ENCODE measurements at regions of chr7 and their contacts with region 1.

Region 1: GRCh38 chr7:130896898-130897514 is 163.0 kb upstream of the KLF14 start:
- DNase-seq: no peak
- H3K4me3 ChIP-seq: no peak overlapping the region
- H3K27me3 ChIP-seq: no peaks in the 10 kb centered on the region
- CTCF ChIP-seq: peak; percentile 77

Region 2: GRCh38 chr7:130752424-130752823 is 144.6 kb before region 1 on chr7:
- CTCF ChIA-PET with region 1: no interaction called
- POLR2A ChIA-PET with region 1: no interaction called
- DNase-seq: no peak
- H3K4me3 ChIP-seq: no peak overlapping the region
- H3K27me3 ChIP-seq: peaks cover 4% of the 10 kb centered on the region
- CTCF ChIP-seq: no peak

Region 3: GRCh38 chr7:130875265-130875741 is 21.7 kb before region 1 on chr7:
- CTCF ChIA-PET with region 1: interaction called, 11 read pairs
- POLR2A ChIA-PET with region 1: no interaction called
- DNase-seq: no peak
- H3K4me3 ChIP-seq: no peak overlapping the region
- H3K27me3 ChIP-seq: no peaks in the 10 kb centered on the region
- CTCF ChIP-seq: peak; percentile 82

Region 4: GRCh38 chr7:130945411-130945811 is 48.4 kb after region 1 on chr7:
- CTCF ChIA-PET with region 1: interaction called, 10 read pairs
- POLR2A ChIA-PET with region 1: no interaction called
- DNase-seq: no peak
- H3K4me3 ChIP-seq: no peak overlapping the region
- H3K27me3 ChIP-seq: no peaks in the 10 kb centered on the region
- CTCF ChIP-seq: no peak

Region 5: GRCh38 chr7:130982160-130982638 is 85.2 kb after region 1 on chr7:
- CTCF ChIA-PET with region 1: interaction called, 29 read pairs
- POLR2A ChIA-PET with region 1: interaction called, 3 read pairs
- DNase-seq: no peak
- H3K4me3 ChIP-seq: no peak overlapping the region
- H3K27me3 ChIP-seq: no peaks in the 10 kb centered on the region
- CTCF ChIP-seq: peak; percentile 81

Region 6: DNA sequence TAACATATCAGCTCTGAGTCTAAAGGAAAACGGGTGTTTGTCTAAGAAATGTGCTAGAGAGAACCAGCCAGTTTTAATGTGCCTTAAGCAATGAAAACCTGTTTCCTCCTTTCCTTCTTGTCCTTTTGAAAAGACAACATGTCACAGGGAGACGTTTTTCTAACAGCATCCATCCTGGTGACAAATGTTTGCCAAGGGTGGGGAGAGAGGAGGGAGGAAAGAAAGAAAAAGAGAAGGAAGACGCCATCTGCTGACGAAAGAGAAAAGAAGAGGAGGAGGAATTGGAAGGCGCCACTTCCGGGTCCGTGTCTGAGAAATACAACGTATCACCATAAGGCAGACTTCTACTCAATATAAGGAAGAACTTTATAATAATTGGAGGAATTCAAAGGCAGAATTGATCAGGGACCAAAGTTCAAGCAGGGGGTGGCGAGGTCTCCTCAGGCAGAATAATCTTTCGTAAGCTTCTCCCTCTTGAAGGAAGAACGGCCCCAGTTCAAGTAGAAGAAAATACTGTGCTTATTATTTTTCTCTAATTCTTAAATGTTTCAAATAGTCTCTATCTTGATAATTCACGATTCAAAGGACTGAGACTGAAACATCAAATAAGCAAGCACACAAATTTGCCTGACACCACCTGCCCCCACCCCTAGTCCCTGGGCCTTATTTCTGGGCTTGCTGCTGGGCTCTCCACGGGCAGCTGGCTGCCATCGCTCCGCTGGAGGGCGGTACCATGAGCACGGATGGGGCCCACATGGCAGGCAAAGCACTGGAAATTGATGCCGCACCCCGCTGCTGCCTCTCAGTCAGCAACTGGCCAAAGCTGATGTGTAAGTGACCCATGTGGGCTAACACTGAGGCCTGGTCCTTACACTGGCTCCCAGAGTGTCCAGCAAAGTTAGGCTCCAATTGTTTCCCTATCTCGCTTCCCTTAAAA is 110.7 kb after region 1 on chr7:
- CTCF ChIA-PET with region 1: interaction called, 33 read pairs
- POLR2A ChIA-PET with region 1: no interaction called
- DNase-seq: no peak
- H3K4me3 ChIP-seq: no peak overlapping the region
- H3K27me3 ChIP-seq: no peaks in the 10 kb centered on the region
- CTCF ChIP-seq: peak; percentile 57

Region 7: DNA sequence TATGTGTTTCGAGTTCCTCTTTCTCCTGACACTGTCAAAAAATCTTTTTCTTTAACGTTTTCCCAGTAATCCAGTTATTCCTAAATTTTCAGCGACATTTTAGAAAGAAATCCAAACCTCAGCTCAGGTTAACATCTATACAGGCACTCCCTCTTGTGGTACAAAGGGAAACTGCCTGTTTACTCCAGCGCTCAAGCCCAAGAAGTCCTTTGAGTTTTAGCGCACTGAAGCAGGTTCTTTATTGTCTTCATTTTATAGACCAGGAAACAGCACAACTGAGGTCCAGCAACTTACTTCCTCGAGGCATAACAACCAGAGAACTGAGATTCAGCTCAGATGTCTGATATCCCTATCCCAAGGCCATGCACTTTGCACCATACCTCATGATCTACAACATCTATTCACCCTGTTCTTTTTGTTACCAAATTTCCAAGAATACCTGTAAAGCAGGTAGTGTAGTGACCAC is 143.5 kb after region 1 on chr7:
- CTCF ChIA-PET with region 1: interaction called, 50 read pairs
- POLR2A ChIA-PET with region 1: no interaction called
- DNase-seq: no peak
- H3K4me3 ChIP-seq: no peak overlapping the region
- H3K27me3 ChIP-seq: no peaks in the 10 kb centered on the region
- CTCF ChIP-seq: peak; percentile 93

Region 8: GRCh38 chr7:131625817-131626372 is 728.9 kb after region 1 on chr7:
- CTCF ChIA-PET with region 1: no interaction called
- POLR2A ChIA-PET with region 1: no interaction called
- DNase-seq: peak; percentile 47
- H3K4me3 ChIP-seq: no peak overlapping the region
- H3K27me3 ChIP-seq: no peaks in the 10 kb centered on the region
- CTCF ChIP-seq: peak; percentile 50

Measured in BJ (cell line).